Dendritic cell treated with granulocyte-macrophage colony-stimulating factor and Interleukin-4, amounts not matched to agents 40 ng/mL and 50 ng/mL, for 4 days (primary cell): ENCODE measurements at regions of chr13 and their contacts with region 1.

Region 1: GRCh38 chr13:102845630-102846260 is at the start of gene ERCC5:
- H3K4me3 Mint-ChIP-seq: peak within 1 kb of the TSS; percentile 89
- H3K27ac Mint-ChIP-seq: peak within 1 kb of the TSS; percentile 97
- H3K4me1 Mint-ChIP-seq: peaks cover 31% of the 10 kb centered on the region
- H3K27me3 Mint-ChIP-seq: no peaks in the 10 kb centered on the region

Region 2: GRCh38 chr13:102003848-102004570 is 841.7 kb before region 1 on chr13:
- intact Hi-C with region 1: no loop called
- H3K4me3 Mint-ChIP-seq: no peak overlapping the region
- H3K27ac Mint-ChIP-seq: no peak overlapping the region
- H3K4me1 Mint-ChIP-seq: no peaks in the 10 kb centered on the region
- H3K27me3 Mint-ChIP-seq: no peaks in the 10 kb centered on the region

Region 3: DNA sequence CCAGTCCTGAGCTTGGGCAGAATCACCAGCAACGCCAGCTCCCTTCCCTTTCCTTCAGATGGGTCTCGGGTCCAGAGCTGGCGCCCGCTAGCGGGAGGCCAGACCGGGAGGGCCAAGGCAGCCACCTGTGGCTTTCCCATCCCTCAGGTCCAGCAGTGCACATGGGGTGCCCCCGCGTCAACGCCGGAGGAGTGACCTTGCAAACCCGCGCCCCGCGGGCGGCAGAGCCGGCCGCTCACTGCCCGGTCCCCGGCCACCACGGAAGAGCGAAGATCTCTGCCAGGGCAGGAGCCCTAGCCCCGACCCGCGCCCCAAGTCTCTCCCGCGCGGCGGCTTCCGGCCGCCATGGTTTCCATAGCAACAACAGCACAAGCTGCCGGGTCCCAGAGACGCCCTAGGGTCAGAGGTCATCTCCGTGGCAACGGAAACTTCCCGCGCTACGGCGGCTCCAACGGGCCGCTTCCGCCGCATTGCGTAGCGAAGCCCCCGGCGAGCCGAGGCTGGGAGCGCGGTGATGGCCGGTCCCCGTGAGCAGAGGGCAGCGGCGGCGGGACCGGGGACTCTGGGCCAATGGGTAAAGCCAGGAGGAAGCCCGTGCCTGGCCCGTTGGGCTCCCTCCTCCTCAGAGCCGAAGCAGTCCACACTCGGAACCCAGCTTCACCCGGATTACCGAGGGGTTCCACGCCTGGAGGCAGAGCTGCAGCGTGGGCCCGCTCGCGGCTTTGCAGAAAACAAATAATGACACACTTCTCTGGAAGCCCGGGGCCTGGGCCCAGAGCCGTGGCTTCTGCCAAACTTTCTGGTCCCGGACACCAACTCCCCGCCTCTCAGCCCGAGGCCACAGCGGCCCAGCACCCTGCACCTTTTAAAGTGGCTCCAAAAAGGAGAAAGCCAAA is 451.3 kb before region 1 on chr13:
- intact Hi-C with region 1: loop called (anchors 10 kb)
- H3K4me3 Mint-ChIP-seq: peak overlapping the region; percentile 86
- H3K27ac Mint-ChIP-seq: peak overlapping the region; percentile 68
- H3K4me1 Mint-ChIP-seq: peaks cover 15% of the 10 kb centered on the region
- H3K27me3 Mint-ChIP-seq: peaks cover 35% of the 10 kb centered on the region

Region 4: GRCh38 chr13:102580552-102581169 is 265.1 kb before region 1 on chr13:
- intact Hi-C with region 1: loop called (anchors 1 kb)
- H3K4me3 Mint-ChIP-seq: no peak overlapping the region
- H3K27ac Mint-ChIP-seq: no peak overlapping the region
- H3K4me1 Mint-ChIP-seq: peaks cover 23% of the 10 kb centered on the region
- H3K27me3 Mint-ChIP-seq: no peaks in the 10 kb centered on the region

Region 5: DNA sequence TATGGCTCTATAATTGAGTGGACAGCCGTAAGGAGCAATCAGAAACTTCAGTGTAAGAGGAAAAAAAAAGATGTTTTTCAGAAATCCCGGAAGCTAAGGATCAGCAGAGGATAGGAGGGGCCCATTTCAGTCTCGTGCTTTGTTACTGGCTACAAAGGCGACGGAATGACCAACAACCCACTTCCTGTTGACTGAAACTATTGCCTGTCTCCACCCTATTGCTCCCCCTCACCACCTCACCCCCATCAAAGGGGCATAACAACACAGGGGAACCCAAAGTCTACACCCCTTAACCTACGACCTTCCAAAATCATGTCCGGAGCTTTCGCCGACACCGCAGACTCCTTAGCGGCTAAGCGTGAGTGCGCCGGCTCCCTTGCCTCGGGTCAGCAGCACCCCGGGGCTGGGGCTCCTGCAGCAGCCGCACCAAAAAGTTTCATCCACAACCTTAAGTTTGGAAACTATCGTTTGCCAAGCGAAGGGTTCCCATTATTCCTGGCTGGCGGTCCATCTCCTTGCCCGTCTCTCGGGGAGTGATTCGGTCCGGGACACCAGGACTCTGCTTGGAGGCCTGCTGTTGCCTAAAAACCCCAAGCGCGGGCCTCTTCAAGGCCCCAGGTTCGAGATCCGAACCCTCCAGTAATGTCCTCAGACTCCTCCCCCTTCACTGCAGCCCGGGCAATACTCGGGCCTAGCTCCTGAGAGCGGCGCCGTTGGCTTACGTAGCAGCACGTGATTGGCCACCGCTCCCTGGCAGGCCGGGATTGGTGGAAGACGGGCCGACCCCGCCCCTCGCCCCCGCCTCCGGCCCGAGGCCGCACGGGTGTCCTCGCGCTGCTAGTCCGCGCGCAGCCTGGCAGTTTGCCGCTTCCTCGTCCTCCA is 249.4 kb before region 1 on chr13 and contains the start of gene TPP2:
- intact Hi-C with region 1: loop called (anchors 1 kb)
- H3K4me3 Mint-ChIP-seq: peak within 1 kb of the TSS; percentile 93
- H3K27ac Mint-ChIP-seq: peak within 1 kb of the TSS; percentile 100
- H3K4me1 Mint-ChIP-seq: peaks cover 48% of the 10 kb centered on the region
- H3K27me3 Mint-ChIP-seq: no peaks in the 10 kb centered on the region

Region 6: GRCh38 chr13:102773441-102774215 is 72.1 kb before region 1 on chr13 and contains the start of gene TEX30:
- intact Hi-C with region 1: loop called (anchors 1 kb)
- H3K4me3 Mint-ChIP-seq: peak within 1 kb of the TSS; percentile 79
- H3K27ac Mint-ChIP-seq: peak within 1 kb of the TSS; percentile 84
- H3K4me1 Mint-ChIP-seq: peaks cover 47% of the 10 kb centered on the region
- H3K27me3 Mint-ChIP-seq: no peaks in the 10 kb centered on the region

Region 7: GRCh38 chr13:102800145-102801041 is 45.4 kb before region 1 on chr13:
- intact Hi-C with region 1: loop called (anchors 1 kb)
- H3K4me3 Mint-ChIP-seq: peak overlapping the region; percentile 86
- H3K27ac Mint-ChIP-seq: peak overlapping the region; percentile 70
- H3K4me1 Mint-ChIP-seq: peaks cover 25% of the 10 kb centered on the region
- H3K27me3 Mint-ChIP-seq: peaks cover 30% of the 10 kb centered on the region

Region 8: GRCh38 chr13:102863590-102863989 is 17.8 kb after region 1 on chr13:
- intact Hi-C with region 1: no loop called
- H3K4me3 Mint-ChIP-seq: no peak overlapping the region
- H3K27ac Mint-ChIP-seq: no peak overlapping the region
- H3K4me1 Mint-ChIP-seq: peaks cover 29% of the 10 kb centered on the region
- H3K27me3 Mint-ChIP-seq: no peaks in the 10 kb centered on the region

Region 9: GRCh38 chr13:102877303-102877702 is 31.6 kb after region 1 on chr13:
- intact Hi-C with region 1: no loop called
- H3K4me3 Mint-ChIP-seq: no peak overlapping the region
- H3K27ac Mint-ChIP-seq: no peak overlapping the region
- H3K4me1 Mint-ChIP-seq: no peaks in the 10 kb centered on the region
- H3K27me3 Mint-ChIP-seq: no peaks in the 10 kb centered on the region

Region 10: GRCh38 chr13:103140001-103140671 is 294.4 kb after region 1 on chr13:
- intact Hi-C with region 1: no loop called
- H3K4me3 Mint-ChIP-seq: no peak overlapping the region
- H3K27ac Mint-ChIP-seq: no peak overlapping the region
- H3K4me1 Mint-ChIP-seq: no peaks in the 10 kb centered on the region
- H3K27me3 Mint-ChIP-seq: no peaks in the 10 kb centered on the region